ENCODE measurements at regions of chr13 and their contacts with region 1.

Region 1: DNA sequence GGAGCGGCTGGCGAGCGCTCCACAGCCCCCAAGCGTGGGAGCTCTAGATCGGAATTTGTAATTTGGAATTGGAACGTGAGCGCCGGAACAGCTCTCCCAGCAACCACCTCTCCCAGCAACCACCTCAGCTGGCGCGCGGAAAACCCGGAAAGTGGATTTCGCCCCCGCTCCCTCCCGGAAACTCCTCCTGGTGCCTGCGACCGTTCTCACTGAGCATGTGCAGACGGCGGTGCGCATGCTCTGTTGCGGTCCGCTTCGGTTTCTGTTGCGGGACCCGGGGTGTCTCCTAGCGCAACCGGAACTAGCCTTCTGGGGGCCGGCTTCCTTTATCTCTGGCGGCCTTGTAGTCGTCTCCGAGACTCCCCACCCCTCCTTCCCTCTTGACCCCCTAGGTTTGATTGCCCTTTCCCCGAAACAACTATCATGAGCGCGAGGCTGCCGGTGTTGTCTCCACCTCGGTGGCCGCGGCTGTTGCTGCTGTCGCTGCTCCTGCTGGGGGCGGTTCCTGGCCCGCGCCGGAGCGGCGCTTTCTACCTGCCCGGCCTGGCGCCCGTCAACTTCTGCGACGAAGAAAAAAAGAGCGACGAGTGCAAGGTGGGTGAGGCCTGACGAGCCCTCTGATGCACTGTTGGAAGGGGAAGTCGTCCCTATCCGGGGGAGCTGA is at the start of gene TM9SF2:
- DNase-seq: peak; percentile 98
- H3K4me3 Mint-ChIP-seq: peak within 1 kb of the TSS; percentile 92
- H3K27ac Mint-ChIP-seq: peak within 1 kb of the TSS; percentile 92
- H3K4me1 Mint-ChIP-seq: peaks cover 70% of the 10 kb centered on the region
- H3K27me3 Mint-ChIP-seq: no peaks in the 10 kb centered on the region
- total RNA-seq, gene TM9SF2: 35.2 to 36.4 TPM

Region 2: DNA sequence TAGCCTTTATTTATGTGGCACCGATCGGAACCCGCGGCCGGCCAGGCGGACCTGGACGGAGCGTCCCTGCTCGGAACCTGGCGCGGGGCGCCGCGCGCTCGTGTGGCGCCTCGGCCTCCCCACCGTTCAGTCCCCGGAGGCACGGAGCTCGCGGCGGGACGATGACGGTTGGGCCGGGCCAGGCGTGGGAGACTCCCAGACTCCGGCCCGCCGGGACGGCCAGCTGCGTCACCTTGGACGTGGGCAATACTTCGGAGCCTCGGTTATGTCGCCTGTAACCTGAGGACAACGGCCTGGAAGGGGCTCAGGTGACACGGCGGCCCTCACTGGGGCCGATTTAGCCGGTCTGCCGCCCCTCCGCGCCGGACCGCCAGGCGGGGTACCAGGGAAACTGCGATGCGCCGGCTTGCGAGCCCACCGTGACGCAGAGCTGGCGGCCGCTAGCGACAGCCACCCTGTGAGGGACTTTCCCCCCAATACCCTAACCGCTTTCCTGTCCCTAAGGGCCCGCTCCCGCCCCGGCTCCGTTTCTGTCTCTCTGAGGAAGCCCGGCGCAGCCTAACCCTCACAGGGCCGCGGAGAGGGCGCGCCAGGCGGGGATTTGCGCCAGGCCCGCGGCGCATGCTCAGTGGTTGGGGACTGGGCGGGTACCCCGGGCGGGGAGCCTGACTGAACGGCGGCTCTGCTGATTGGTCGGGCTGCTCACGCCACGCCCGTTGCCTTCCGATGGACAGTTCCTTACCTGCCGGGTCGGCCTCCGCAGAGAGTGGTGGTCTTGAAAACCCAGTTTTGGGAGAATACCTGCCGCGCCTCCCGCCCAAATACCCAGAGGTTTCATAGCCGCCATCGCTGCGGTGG is 414.0 kb before region 1 on chr13:
- CTCF ChIA-PET with region 1: no interaction called
- intact Hi-C with region 1: loop called (anchors 2 kb)
- DNase-seq: peak; percentile 94
- H3K4me3 Mint-ChIP-seq: peak overlapping the region; percentile 99
- H3K27ac Mint-ChIP-seq: peak overlapping the region; percentile 97
- H3K4me1 Mint-ChIP-seq: peaks cover 30% of the 10 kb centered on the region
- H3K27me3 Mint-ChIP-seq: no peaks in the 10 kb centered on the region

Region 3: DNA sequence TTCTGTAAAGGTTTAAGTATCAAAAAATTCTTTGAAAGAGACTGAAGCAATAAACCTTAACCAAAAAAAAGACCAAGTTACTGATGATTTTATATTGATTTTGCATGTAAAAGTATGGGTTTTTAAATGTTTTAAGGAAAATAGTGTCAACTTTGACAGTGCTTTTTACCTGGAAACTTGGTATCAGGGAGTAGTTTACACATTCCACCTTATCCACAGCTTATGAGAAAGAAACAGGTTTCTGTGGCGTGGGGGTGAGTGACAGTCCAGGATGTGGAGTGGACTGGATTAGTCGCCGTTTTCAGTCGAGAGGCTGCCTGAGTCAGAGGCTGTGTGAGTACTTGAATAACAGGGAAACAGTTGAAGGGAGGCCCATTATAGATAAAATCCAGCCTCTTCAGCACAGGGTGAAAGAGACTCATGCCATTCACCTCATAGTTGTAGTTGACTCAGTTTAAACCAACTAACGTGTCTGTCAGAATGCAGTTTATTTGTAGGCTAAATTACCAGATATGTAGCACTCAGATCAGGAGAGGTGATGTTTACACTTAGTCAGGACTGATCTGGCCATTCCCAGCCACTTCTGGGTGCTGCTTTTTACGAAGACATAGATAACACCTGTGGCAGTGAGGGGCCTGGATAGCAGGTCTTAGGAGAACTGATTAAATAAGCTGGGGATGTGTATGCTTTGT is 193.5 kb before region 1 on chr13:
- CTCF ChIA-PET with region 1: no interaction called
- intact Hi-C with region 1: loop called (anchors 5 kb)
- DNase-seq: peak; percentile 89
- H3K4me3 Mint-ChIP-seq: peak overlapping the region; percentile 93
- H3K27ac Mint-ChIP-seq: peak overlapping the region; percentile 99
- H3K4me1 Mint-ChIP-seq: peaks cover 73% of the 10 kb centered on the region
- H3K27me3 Mint-ChIP-seq: no peaks in the 10 kb centered on the region

Region 4: DNA sequence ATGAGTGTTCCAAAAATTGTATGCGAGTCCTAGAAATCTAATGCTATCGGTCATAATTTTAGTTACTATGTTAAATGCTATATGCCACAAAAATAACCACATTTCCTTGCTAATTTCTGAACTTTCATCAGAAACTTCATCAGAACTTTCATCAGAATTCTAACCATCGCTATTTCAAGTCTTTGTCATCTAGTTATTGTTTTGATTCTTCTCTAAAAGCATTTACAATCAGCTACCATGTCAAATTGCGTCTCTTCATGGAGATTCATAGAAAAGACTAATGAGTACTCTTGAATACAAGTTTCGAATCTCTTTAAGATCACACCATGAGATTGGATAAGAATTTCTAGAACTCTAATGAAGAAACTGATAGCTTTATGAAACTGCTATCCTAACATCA is 52.8 kb before region 1 on chr13:
- CTCF ChIA-PET with region 1: interaction called, 16 read pairs
- intact Hi-C with region 1: no loop called
- DNase-seq: no peak
- H3K4me3 Mint-ChIP-seq: no peak overlapping the region
- H3K27ac Mint-ChIP-seq: no peak overlapping the region
- H3K4me1 Mint-ChIP-seq: no peaks in the 10 kb centered on the region
- H3K27me3 Mint-ChIP-seq: peaks cover 4% of the 10 kb centered on the region

Region 5: GRCh38 chr13:99606324-99607066 is 105.2 kb after region 1 on chr13:
- CTCF ChIA-PET with region 1: interaction called, 3 read pairs
- intact Hi-C with region 1: loop called (anchors 1 kb)
- DNase-seq: peak; percentile 92
- H3K4me3 Mint-ChIP-seq: peak within 1 kb of the TSS; percentile 82
- H3K27ac Mint-ChIP-seq: peak within 1 kb of the TSS; percentile 75
- H3K4me1 Mint-ChIP-seq: peaks cover 23% of the 10 kb centered on the region
- H3K27me3 Mint-ChIP-seq: no peaks in the 10 kb centered on the region